MCF 10A (cell line): ENCODE measurements at regions of chrX and their contacts with region 1.

Region 1: DNA sequence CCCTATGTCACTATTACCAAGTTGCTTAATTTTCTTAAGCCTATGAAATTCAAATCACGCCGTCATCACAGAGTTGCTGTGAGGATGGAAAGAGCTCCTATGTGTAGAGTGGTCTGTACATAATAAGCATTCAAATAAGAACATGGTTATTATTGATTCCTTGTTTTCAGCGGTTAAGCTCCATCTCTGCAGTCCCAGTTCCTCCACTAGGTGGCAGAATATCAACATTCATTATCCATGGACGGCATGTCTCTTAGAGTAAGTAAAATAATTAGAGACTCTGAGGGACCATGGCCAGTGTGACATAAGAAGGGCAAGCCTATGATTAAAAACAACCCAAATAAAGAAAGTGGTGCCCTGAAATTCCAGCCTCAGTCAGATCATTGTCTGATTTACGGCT is 132.5 kb upstream of the NHS start:
- DNase-seq: peak; percentile 66
- H3K4me3 Mint-ChIP-seq: no peak overlapping the region
- H3K27ac Mint-ChIP-seq: no peak overlapping the region
- H3K4me1 Mint-ChIP-seq: no peaks in the 10 kb centered on the region
- H3K27me3 Mint-ChIP-seq: peaks cover 29% of the 10 kb centered on the region
- CTCF ChIP-seq: peak; percentile 64

Region 2: GRCh38 chrX:17292132-17292527 is 49.7 kb after region 1 on chrX:
- CTCF ChIA-PET with region 1: interaction called, 10 read pairs
- POLR2A ChIA-PET with region 1: no interaction called
- intact Hi-C with region 1: no loop called
- DNase-seq: no peak
- H3K4me3 Mint-ChIP-seq: no peak overlapping the region
- H3K27ac Mint-ChIP-seq: no peak overlapping the region
- H3K4me1 Mint-ChIP-seq: no peaks in the 10 kb centered on the region
- H3K27me3 Mint-ChIP-seq: peaks cover 21% of the 10 kb centered on the region
- CTCF ChIP-seq: no peak

Region 3: GRCh38 chrX:17397074-17397473 is 154.6 kb after region 1 on chrX:
- CTCF ChIA-PET with region 1: no interaction called
- POLR2A ChIA-PET with region 1: no interaction called
- intact Hi-C with region 1: no loop called
- DNase-seq: no peak
- H3K4me3 Mint-ChIP-seq: no peak overlapping the region
- H3K27ac Mint-ChIP-seq: no peak overlapping the region
- H3K4me1 Mint-ChIP-seq: peaks cover 6% of the 10 kb centered on the region
- H3K27me3 Mint-ChIP-seq: no peaks in the 10 kb centered on the region
- CTCF ChIP-seq: no peak

Region 4: DNA sequence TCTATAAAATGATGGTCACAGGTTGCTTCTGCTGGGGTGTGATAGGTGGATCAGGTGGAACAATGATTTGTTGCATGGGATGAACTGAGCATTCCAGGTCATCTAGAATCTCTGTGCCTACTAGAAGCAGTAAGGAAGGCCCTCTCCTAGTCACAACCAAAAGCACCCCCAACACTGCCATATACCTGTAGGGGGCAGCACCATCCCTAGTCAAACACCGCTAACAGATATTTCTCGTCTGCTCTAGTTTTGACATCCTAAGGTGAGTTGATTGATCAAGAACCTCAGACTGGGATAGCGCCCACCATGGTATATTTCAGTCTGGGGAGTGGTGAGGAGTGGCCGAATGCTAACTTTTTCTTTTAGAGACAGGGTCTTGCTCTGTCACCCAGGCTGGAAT is 292.8 kb after region 1 on chrX:
- CTCF ChIA-PET with region 1: interaction called, 3 read pairs
- POLR2A ChIA-PET with region 1: no interaction called
- intact Hi-C with region 1: loop called (anchors 2 kb)
- DNase-seq: peak; percentile 78
- H3K4me3 Mint-ChIP-seq: no peak overlapping the region
- H3K27ac Mint-ChIP-seq: no peak overlapping the region
- H3K4me1 Mint-ChIP-seq: no peaks in the 10 kb centered on the region
- H3K27me3 Mint-ChIP-seq: peaks cover 73% of the 10 kb centered on the region
- CTCF ChIP-seq: peak; percentile 42

Region 5: GRCh38 chrX:17608898-17609297 is 366.4 kb after region 1 on chrX:
- CTCF ChIA-PET with region 1: interaction called, 12 read pairs
- POLR2A ChIA-PET with region 1: no interaction called
- intact Hi-C with region 1: no loop called
- DNase-seq: peak; percentile 79
- H3K4me3 Mint-ChIP-seq: no peak overlapping the region
- H3K27ac Mint-ChIP-seq: peak overlapping the region; percentile 20
- H3K4me1 Mint-ChIP-seq: peaks cover 23% of the 10 kb centered on the region
- H3K27me3 Mint-ChIP-seq: peaks cover 86% of the 10 kb centered on the region
- CTCF ChIP-seq: no peak